ENCODE measurements at regions of chr2 and their contacts with region 1.

Region 1: DNA sequence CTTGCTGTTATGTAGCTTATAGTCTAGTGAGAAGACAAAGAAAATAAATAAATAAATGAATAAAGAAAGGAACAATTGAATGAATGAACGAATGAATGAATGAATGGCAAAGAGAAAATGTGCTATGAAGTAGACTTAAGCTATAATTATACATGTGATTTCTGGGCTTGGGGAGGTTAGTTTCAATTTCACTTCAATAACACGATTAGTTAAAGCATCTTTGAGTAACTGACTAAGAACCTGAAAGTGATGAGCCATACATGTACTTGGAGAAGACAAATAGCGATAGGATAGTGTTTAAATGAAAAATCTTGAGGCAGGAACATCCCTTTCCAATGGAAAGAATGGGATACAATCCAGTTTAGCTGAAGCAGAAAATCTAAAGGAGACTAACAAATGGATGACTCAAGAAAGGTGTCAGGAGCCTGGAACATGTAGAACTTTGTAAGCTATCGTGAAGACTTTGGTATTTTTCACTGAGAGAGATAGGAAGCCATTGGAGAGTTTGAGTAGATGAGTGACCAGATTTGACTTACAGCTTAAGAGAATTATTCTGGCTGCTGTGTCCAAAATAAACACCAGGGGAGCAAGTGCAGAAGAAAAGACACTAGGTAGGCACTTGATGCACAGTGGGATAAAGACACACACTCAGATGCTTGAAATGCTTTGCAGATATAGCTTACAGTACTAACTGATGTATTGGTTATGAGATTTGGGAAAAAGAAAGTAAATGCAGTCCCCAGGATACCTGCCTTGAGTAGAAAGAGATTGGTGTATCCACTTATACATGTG is 593.3 kb upstream of the LRRTM4 start:
- DNase-seq: no peak
- ATAC-seq: no peak
- H3K4me3 ChIP-seq: no peak overlapping the region
- H3K4me3 Mint-ChIP-seq: no peak overlapping the region
- H3K27ac ChIP-seq: no peak overlapping the region
- H3K27ac Mint-ChIP-seq: no peak overlapping the region
- H3K4me1 ChIP-seq: no peaks in the 10 kb centered on the region
- H3K4me1 Mint-ChIP-seq: no peaks in the 10 kb centered on the region
- H3K27me3 ChIP-seq: no peaks in the 10 kb centered on the region
- H3K27me3 Mint-ChIP-seq: no peaks in the 10 kb centered on the region
- CTCF ChIP-seq: no peak

Region 2: GRCh38 chr2:76721226-76721625 is 1394.3 kb before region 1 on chr2:
- CTCF ChIA-PET with region 1: no interaction called
- POLR2A ChIA-PET with region 1: no interaction called
- intact Hi-C with region 1: loop called in 1 of 2 experiments (anchors 10 kb)
- DNase-seq: no peak
- ATAC-seq: no peak
- H3K4me3 ChIP-seq: no peak overlapping the region
- H3K4me3 Mint-ChIP-seq: no peak overlapping the region
- H3K27ac ChIP-seq: no peak overlapping the region
- H3K27ac Mint-ChIP-seq: no peak overlapping the region
- H3K4me1 ChIP-seq: no peaks in the 10 kb centered on the region
- H3K4me1 Mint-ChIP-seq: no peaks in the 10 kb centered on the region
- H3K27me3 ChIP-seq: no peaks in the 10 kb centered on the region
- H3K27me3 Mint-ChIP-seq: no peaks in the 10 kb centered on the region
- CTCF ChIP-seq: no peak

Region 3: DNA sequence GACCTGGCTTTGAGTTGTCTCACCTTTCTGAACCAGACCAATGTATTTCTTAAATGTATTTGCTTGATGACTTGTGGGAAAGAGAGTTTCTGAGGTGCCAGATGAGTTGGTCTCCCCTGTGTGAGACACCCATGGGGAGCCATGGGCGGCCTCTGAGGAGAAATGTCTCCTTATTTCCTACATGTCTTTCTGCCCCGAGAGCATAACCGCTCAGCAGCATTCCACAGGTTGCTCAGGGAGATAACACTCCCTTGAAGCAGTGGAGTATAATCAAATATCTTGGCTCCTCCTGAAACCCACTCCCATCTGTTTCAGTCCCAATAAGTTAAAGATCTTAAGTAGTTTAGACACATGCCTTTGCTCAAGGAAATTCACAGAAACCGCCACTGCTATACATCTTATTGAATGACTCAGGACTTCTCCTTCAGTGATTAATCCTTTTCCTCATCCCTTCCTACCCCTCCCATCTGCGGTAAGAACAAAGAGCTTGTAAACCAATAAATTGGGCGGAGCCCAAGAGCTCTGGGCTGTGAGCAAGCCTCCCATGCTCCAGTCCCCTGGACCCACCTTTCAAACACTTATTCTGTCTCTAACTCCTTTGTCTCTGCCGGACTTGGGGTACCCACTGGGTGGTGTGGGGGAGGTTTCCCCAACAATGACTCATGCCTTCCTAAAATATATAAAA is 307.8 kb before region 1 on chr2:
- CTCF ChIA-PET with region 1: no interaction called
- POLR2A ChIA-PET with region 1: no interaction called
- intact Hi-C with region 1: no loop called
- DNase-seq: no peak
- ATAC-seq: no peak
- H3K4me3 ChIP-seq: no peak overlapping the region
- H3K4me3 Mint-ChIP-seq: no peak overlapping the region
- H3K27ac ChIP-seq: no peak overlapping the region
- H3K27ac Mint-ChIP-seq: no peak overlapping the region
- H3K4me1 ChIP-seq: no peaks in the 10 kb centered on the region
- H3K4me1 Mint-ChIP-seq: no peaks in the 10 kb centered on the region
- H3K27me3 ChIP-seq: no peaks in the 10 kb centered on the region
- H3K27me3 Mint-ChIP-seq: no peaks in the 10 kb centered on the region
- CTCF ChIP-seq: no peak

Region 4: GRCh38 chr2:78304678-78305077 is 189.2 kb after region 1 on chr2:
- CTCF ChIA-PET with region 1: no interaction called
- POLR2A ChIA-PET with region 1: no interaction called
- intact Hi-C with region 1: no loop called
- DNase-seq: no peak
- ATAC-seq: no peak
- H3K4me3 ChIP-seq: no peak overlapping the region
- H3K4me3 Mint-ChIP-seq: no peak overlapping the region
- H3K27ac ChIP-seq: no peak overlapping the region
- H3K27ac Mint-ChIP-seq: no peak overlapping the region
- H3K4me1 ChIP-seq: no peaks in the 10 kb centered on the region
- H3K4me1 Mint-ChIP-seq: no peaks in the 10 kb centered on the region
- H3K27me3 ChIP-seq: no peaks in the 10 kb centered on the region
- H3K27me3 Mint-ChIP-seq: no peaks in the 10 kb centered on the region
- CTCF ChIP-seq: no peak